Right ventricle myocardium inferior (tissue), 1 donor: ENCODE measurements at regions of chr1 and their contacts with region 1.

Region 1: DNA sequence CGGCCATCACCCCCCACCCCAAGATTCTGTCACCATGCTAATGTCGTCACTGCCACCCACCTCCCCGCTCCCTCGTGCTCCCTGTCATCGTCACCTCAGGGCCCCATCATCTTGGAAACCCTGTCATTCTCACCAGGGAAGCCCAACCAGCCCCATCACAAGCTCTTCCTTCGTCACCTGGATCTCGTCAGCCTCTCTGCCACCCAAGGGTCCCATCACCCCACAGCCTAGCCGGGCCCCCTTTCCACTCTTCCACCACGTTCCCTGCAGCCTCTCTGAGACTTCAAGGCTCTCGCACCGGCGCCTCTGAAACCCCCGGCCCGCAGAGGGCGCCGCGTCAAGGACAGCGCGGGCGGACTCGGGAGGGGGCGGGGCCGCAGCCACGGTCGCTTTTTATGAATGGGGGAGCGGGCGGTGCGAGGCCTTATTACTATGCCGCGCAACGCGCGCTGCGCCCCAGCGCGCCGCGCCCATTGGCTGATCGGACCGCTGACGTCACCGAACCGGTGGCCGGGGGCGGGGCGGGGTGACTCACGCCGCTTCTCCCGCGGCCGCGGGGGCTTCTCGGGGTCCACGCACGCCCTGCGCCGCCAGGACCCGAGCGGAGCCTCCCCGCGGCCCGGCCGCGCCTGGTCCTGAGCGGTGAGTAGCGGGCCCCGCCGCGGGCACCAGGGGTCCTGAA is at the start of gene GPR3:
- DNase-seq: peak; percentile 96
- ATAC-seq: peak; percentile 91
- total RNA-seq, gene GPR3: not detected

Region 2: DNA sequence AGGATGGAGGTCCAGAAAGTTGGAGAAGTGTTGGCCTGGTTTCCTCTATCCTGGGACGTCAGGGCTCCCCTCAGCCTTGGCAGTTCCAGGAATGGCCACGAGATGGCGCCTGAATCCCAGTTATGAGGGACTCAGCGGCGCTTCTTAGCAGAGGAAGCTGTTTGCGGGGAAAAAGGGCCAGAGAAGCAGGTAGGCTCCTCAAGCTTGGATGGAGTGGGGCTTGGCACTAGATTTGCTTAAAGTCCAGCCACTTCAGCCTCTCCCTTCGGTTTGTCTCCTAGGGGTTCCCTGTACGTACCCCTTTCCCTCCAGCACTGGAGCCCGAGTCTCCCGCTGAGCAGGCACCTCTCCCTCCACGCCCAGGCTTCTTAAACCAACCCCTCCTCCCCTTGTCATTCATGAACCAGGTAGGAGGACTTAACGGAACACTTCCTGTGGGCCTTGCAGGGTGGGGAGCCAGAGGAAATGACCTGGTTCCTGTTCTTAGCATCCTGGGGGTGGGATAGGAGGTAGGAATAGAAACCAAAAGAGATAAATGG is 347.6 kb before region 1 on chr1:
- intact Hi-C with region 1: loop called (anchors 10 kb)
- DNase-seq: peak; percentile 92
- ATAC-seq: peak; percentile 92

Region 3: DNA sequence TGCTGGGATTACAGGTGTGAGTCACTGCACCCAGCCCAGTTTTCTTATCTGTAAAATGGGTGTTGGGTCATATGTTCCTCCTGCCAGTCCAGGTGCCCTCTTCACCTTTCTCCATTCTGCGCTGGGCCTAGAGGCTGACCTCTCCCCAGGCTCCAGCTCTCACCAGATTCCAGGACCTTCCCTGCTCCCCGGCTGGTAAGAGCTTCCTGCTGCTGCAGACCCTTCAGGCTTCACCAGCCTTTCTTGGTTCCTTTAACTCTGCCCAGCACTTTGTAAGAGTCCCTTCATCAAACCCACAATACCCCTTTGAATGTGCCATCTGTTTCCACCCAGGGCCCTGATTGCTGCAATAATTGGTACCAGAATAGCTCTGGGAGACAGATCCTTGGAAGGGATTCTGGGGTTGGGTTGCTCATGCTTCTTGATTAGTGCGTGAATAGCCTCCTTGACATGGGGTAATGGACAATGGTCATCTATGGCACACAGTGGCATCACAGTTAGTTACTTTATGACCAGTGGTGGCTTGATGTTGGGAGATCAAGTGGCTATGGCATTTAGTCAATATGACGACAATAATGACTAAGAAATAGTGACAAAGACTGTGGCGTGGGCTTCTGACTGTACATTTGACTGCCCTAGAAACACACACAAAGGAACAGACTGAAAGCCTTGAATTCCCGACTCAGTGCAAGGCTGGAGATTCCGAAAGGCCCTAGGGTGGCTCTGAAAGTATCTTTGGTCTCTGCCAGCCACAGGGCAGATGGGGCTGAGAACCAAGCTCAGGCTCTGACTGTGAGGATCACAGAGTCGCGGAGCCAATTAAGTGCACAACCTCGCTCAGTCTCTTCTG is 304.6 kb before region 1 on chr1:
- intact Hi-C with region 1: no loop called
- DNase-seq: no peak
- ATAC-seq: no peak

Region 4: GRCh38 chr1:27275696-27276095 is 116.5 kb before region 1 on chr1:
- intact Hi-C with region 1: no loop called
- DNase-seq: no peak
- ATAC-seq: no peak

Region 5: DNA sequence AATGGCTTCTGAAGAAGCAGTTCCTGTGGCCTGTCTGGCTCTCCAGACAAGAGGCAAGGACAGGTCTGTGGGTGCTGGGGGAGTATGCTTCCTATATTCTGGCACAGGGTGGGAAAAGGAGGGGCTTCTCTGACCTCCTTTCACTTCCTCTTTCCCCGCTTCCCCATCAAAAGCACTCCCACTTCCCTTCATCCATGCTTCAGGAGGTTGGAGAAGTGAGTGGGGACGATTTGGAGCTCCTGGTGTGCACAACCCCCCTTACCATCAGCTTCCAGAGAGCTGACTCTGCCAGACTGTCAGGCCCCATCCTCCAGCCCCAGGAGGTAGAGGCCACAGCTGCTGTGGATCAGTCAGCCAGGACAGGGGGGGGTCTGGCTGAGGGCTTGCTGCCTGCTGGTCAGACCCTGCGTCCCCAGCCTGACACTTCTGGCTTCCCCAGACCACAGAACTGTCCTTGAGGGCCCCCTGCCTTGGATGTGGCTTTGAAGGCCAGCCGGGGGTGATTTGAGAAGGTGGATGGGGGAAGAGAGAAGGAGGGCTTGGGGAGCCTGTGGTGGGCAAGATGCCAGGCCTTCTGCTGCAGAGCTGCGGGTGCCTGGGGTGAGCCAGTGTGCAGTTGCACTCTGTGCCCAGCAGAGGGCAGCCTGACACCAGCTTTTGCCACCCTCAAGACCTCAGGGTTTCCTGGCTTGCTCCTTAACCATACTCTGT is 91.7 kb before region 1 on chr1:
- intact Hi-C with region 1: loop called (anchors 1 kb)
- DNase-seq: peak; percentile 92
- ATAC-seq: peak; percentile 85

Region 6: GRCh38 chr1:27332536-27333281 is 59.5 kb before region 1 on chr1:
- intact Hi-C with region 1: loop called (anchors 2 kb)
- DNase-seq: peak; percentile 83
- ATAC-seq: peak; percentile 20

Region 7: DNA sequence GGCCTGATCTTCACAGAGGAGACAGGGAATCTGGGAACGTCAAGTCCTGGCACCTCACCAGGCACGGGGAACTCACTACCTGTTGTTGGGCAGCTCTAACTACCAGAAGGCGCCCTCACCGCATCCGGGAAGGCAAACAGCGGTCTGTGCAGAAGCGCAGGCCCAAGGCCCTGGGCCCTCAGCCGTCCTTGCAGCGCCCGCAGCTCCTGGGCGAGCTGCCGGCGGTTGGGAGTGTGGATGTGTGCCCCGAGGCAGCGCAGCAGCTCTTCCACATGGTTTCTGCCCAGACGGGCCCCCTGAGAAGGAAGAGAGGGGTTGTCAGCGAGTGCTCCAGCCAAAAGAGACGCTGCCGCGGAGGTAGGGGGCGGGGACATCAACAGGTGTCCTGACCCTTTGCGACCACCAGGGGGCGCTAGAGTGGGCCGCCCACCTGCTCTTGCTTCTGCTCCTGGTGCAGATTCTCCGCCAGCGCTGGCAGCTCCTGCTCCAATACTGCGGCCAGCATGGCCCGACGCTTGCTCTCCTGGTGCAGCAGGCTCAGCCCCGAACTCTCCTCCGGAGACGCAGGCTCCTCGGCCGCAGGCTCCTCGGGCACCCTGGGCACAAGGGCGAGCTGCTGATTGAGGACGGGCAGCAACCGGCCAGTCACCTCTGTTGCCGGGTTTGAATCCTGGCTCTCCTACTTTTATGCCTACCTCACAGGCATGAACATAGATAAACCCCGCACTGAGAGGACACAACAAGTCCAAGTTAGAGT is 34.8 kb before region 1 on chr1:
- intact Hi-C with region 1: loop called (anchors 5 kb)
- DNase-seq: peak; percentile 92
- ATAC-seq: peak; percentile 65

Region 8: GRCh38 chr1:27365372-27366112 is 26.7 kb before region 1 on chr1:
- intact Hi-C with region 1: loop called (anchors 1 kb)
- DNase-seq: peak; percentile 93
- ATAC-seq: peak; percentile 76

Region 9: GRCh38 chr1:27504588-27505419 is 112.6 kb after region 1 on chr1:
- intact Hi-C with region 1: no loop called
- DNase-seq: peak; percentile 92
- ATAC-seq: peak; percentile 92

Region 10: DNA sequence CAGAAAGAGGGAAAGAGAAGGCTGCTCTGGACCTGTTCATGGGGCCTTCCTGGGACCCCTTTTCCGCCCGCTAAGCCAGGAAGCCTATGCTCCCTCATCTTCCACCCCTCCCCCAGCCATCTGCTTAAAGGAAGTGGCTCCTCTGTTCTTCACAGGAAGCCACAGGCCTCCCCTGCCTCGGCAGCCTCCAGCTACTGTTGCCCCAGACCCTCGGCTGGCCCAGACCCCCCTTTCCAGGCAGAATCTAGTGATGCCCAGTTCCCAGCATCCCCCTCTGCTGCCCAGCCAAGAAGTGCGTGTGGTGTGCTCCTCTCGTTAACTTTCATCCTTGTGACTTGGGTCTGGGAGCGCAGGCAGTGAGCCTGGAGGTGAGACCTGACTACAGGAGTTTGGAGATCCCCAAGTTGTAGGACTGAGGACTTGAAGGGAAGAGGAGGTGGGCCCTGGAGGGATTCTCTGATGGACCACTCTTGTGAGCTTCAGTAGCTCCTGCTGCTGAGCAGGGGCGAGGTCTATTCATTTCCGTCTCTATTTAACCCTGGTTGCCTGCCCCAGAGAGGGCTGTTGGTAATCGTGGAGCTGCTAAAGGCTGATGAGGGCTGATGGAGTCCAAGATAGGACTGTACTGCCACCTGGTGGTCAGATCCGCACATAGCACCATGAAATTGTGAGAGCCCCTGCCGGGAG is 270.6 kb after region 1 on chr1:
- intact Hi-C with region 1: loop called (anchors 5 kb)
- DNase-seq: peak; percentile 80
- ATAC-seq: peak; percentile 72